Activated CD4-positive, alpha-beta T cell treated with anti-CD3 and anti-CD28 coated beads for 36 hours (primary cell): ENCODE measurements at regions of chr4 and their contacts with region 1.

Region 1: DNA sequence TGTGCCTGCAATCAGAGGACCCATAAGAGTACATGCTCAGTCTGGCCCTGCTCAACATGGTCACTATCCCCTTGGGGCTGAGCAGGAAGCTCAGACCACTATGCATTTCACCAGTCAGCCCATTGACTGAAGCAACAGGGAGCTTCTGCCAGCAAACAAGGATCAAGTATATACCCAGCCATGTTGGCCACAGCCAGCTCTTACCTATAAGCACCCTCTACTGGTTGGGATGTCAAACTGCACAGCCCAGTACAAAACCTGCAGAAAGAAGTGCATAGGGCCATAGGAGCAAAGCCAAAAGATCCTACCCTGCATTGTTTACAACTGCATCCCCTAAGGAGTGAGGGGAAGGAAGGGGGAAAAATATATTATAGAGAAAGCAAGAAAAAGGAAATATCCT is 214.4 kb upstream of the CPEB2 start:
- DNase-seq: peak; percentile 42
- ATAC-seq: peak; percentile 27
- H3K4me3 Mint-ChIP-seq: no peak overlapping the region
- H3K27ac Mint-ChIP-seq: no peak overlapping the region
- H3K4me1 Mint-ChIP-seq: peaks cover 35% of the 10 kb centered on the region
- H3K27me3 Mint-ChIP-seq: peaks cover 18% of the 10 kb centered on the region

Region 2: DNA sequence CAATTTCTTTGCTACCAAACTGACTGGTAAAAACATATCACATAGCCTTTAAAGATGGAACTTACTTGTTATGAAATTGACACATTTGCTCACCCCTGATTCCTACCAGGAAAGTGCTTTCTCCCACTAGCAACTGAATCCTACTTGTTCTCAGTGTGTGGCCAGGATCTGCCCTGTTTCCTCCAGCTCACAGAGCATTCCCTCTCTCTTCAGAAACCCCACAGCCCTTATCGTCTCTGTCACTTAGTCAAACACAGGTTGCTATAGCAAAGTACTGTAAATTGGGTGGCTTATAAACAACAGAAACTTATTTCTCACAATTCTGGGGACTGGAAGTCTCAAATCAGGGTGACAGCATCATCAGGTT is 895.2 kb before region 1 on chr4:
- CTCF ChIA-PET with region 1: no interaction called
- POLR2A ChIA-PET with region 1: no interaction called
- intact Hi-C with region 1: loop called in 1 of 2 experiments (anchors 5 kb)
- DNase-seq: no peak
- ATAC-seq: no peak
- H3K4me3 Mint-ChIP-seq: no peak overlapping the region
- H3K27ac Mint-ChIP-seq: peak overlapping the region; percentile 88
- H3K4me1 Mint-ChIP-seq: peaks cover 20% of the 10 kb centered on the region
- H3K27me3 Mint-ChIP-seq: peaks cover 6% of the 10 kb centered on the region

Region 3: GRCh38 chr4:14749910-14750309 is 38.0 kb before region 1 on chr4:
- CTCF ChIA-PET with region 1: interaction called, 4 read pairs
- POLR2A ChIA-PET with region 1: no interaction called
- intact Hi-C with region 1: loop called in 1 of 2 experiments (anchors 1 kb)
- DNase-seq: peak; percentile 56
- ATAC-seq: no peak
- H3K4me3 Mint-ChIP-seq: no peak overlapping the region
- H3K27ac Mint-ChIP-seq: no peak overlapping the region
- H3K4me1 Mint-ChIP-seq: no peaks in the 10 kb centered on the region
- H3K27me3 Mint-ChIP-seq: peaks cover 5% of the 10 kb centered on the region

Region 4: DNA sequence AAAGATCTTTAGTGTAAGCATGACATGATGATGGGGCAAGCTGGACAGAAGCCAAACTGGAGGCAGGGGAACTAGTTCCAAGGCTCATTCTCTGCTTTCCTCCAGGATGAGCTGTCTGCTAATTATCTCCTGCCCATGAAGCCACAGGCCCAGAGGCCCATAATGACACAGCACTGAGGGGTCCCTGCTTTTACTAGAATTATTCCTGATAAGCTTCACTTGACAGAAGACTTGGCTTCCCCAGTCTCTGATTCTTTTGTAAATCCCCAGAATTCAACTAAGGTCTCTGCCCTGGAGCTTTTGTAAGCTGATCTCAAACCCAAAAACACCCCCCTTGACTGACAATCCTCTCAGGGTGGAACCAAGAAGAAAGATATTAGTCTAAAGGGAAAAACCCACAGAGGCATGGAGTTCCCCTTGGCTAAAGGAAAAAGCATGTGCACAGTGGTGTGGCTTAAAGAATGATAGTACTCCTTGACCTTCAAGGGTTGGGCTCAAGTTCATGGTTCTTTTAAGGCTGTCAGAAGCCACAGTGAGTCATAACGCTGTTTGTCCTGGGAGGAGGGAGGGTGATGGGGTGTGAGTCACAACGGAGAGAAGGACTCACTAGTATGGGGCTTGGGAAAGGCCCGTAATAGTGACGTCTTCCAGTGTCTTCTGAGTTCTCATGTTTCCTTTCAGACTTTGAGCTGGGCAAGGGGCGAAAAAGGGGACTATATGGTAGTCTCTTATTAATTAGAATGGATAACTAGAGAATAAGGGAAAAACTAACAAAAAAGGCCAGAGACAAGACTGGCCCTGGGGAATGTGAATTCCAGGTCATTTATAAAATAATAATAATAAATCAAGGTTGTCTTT is 68.4 kb after region 1 on chr4:
- CTCF ChIA-PET with region 1: interaction called, 3 read pairs
- POLR2A ChIA-PET with region 1: interaction called, 3 read pairs
- intact Hi-C with region 1: loop called (anchors 1 kb)
- DNase-seq: peak; percentile 86
- ATAC-seq: peak; percentile 94
- H3K4me3 Mint-ChIP-seq: peak overlapping the region; percentile 3
- H3K27ac Mint-ChIP-seq: peak overlapping the region; percentile 89
- H3K4me1 Mint-ChIP-seq: peaks cover 28% of the 10 kb centered on the region
- H3K27me3 Mint-ChIP-seq: peaks cover 19% of the 10 kb centered on the region

Region 5: DNA sequence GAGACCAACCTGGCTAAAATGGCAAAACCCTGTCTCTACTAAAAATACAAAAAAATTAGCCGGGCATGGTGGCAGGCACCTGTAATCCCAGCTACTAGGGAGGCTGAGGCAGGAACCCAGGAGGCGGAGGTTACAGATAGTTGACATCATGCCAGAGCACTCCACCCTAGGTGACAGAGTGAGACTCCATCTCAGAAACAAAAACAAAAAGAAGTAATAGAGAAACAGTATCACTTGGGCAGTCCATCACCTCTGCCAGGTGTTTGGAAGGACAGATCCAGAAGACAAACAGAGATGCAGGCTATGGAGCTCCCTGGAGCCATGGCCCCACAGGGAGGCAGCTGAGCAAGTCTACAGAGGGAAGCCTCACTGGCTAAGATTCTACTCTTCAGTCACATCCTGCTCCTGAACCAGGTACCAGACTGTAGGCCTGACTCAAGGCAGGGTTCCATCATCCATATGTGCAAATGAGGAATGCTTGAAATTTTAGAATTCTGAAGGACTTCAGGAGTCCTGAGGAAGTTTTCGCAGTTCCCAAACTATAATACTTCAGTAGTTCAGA is 132.9 kb after region 1 on chr4:
- CTCF ChIA-PET with region 1: no interaction called
- POLR2A ChIA-PET with region 1: no interaction called
- intact Hi-C with region 1: loop called in 1 of 2 experiments (anchors 5 kb)
- DNase-seq: peak; percentile 55
- ATAC-seq: peak; percentile 76
- H3K4me3 Mint-ChIP-seq: no peak overlapping the region
- H3K27ac Mint-ChIP-seq: no peak overlapping the region
- H3K4me1 Mint-ChIP-seq: no peaks in the 10 kb centered on the region
- H3K27me3 Mint-ChIP-seq: peaks cover 6% of the 10 kb centered on the region

Region 6: GRCh38 chr4:14977830-14978229 is 189.9 kb after region 1 on chr4:
- CTCF ChIA-PET with region 1: no interaction called
- POLR2A ChIA-PET with region 1: no interaction called
- intact Hi-C with region 1: no loop called
- DNase-seq: no peak
- ATAC-seq: no peak
- H3K4me3 Mint-ChIP-seq: no peak overlapping the region
- H3K27ac Mint-ChIP-seq: no peak overlapping the region
- H3K4me1 Mint-ChIP-seq: peaks cover 2% of the 10 kb centered on the region
- H3K27me3 Mint-ChIP-seq: peaks cover 19% of the 10 kb centered on the region

Region 7: DNA sequence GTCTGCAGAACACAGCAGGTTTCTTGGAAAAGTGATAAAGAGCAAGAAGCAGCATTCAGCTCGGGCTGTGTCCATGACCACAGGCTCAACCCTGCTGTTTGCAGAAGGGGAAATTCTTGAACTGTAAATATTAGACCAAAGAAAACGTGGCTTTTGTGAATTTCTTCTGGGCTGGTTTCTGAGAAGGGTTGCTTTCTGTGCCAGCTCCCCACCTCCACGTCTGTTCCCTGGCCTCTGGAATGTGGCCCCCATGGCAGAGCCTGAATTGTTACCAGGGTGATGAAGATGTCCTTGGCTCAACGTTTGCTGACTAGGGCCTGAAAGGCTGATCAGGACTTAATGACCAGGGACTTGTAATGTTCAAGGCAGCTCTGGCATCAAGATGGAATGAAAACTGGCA is 330.4 kb after region 1 on chr4:
- CTCF ChIA-PET with region 1: no interaction called
- POLR2A ChIA-PET with region 1: no interaction called
- intact Hi-C with region 1: loop called in 1 of 2 experiments (anchors 5 kb)
- DNase-seq: no peak
- ATAC-seq: no peak
- H3K4me3 Mint-ChIP-seq: no peak overlapping the region
- H3K27ac Mint-ChIP-seq: no peak overlapping the region
- H3K4me1 Mint-ChIP-seq: peaks cover 11% of the 10 kb centered on the region
- H3K27me3 Mint-ChIP-seq: peaks cover 25% of the 10 kb centered on the region

Region 8: DNA sequence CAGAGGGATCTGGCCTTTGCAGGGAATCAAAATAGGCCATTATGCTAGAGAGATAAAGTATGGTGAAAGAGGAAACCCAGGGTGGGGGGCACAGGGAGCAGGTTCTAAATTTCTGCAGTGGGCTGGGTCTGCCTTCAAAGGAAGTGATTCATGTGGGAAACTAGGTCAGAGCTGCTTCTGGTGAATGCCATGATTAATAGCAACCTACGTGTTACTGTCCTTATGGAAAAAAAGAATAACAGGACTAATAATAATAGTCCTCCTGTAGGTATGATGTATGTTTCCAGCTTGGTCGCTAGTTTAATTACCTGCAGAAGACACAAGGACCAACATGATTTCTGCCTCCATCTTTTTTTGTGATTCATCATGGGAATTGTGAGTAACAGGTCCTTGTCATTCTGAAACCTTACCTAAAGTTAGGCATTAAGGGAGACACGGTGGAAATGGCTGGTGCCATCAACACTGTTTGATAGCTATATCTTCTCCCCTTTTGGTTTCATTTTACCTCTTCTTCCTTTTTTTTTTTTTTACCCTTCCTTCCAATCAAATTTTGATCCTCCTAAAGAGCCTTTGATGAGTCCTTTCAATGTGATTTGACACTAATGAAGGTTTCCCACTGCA is 394.8 kb after region 1 on chr4:
- CTCF ChIA-PET with region 1: no interaction called
- POLR2A ChIA-PET with region 1: no interaction called
- intact Hi-C with region 1: loop called in 1 of 2 experiments (anchors 5 kb)
- DNase-seq: peak; percentile 54
- ATAC-seq: peak; percentile 94
- H3K4me3 Mint-ChIP-seq: peak overlapping the region; percentile 13
- H3K27ac Mint-ChIP-seq: peak overlapping the region; percentile 82
- H3K4me1 Mint-ChIP-seq: peaks cover 15% of the 10 kb centered on the region
- H3K27me3 Mint-ChIP-seq: no peaks in the 10 kb centered on the region

Region 9: GRCh38 chr4:16006791-16007446 is 1219.0 kb after region 1 on chr4:
- CTCF ChIA-PET with region 1: no interaction called
- POLR2A ChIA-PET with region 1: no interaction called
- intact Hi-C with region 1: no loop called
- DNase-seq: no peak
- ATAC-seq: no peak
- H3K4me3 Mint-ChIP-seq: no peak overlapping the region
- H3K27ac Mint-ChIP-seq: no peak overlapping the region
- H3K4me1 Mint-ChIP-seq: no peaks in the 10 kb centered on the region
- H3K27me3 Mint-ChIP-seq: peaks cover 3% of the 10 kb centered on the region